ENCODE measurements at regions of chr7 and their contacts with region 1.

Region 1: GRCh38 chr7:108525985-108526767 is at the start of gene PNPLA8:
- DNase-seq: peak; percentile 99
- H3K4me3 ChIP-seq: peak within 1 kb of the TSS; percentile 84
- H3K27ac ChIP-seq: peak within 1 kb of the TSS; percentile 73
- H3K4me1 ChIP-seq: peaks cover 34% of the 10 kb centered on the region
- CTCF ChIP-seq: no peak
- total RNA-seq, gene PNPLA8: 23.0 and 24.2 TPM in 2 replicates

Region 2: GRCh38 chr7:108497082-108497725 is 29.0 kb before region 1 on chr7:
- CTCF ChIA-PET with region 1: interaction called, 3 read pairs
- POLR2A ChIA-PET with region 1: interaction called, 31 read pairs
- intact Hi-C with region 1: loop called (anchors 2 kb)
- DNase-seq: peak; percentile 77
- H3K4me3 ChIP-seq: no peak overlapping the region
- H3K27ac ChIP-seq: no peak overlapping the region
- H3K4me1 ChIP-seq: peaks cover 7% of the 10 kb centered on the region
- CTCF ChIP-seq: peak; percentile 97

Region 3: GRCh38 chr7:108503112-108504026 is 22.8 kb before region 1 on chr7:
- CTCF ChIA-PET with region 1: interaction called, 3 read pairs
- POLR2A ChIA-PET with region 1: interaction called, 44 read pairs
- intact Hi-C with region 1: loop called (anchors 2 kb)
- DNase-seq: peak; percentile 90
- H3K4me3 ChIP-seq: peak overlapping the region; percentile 57
- H3K27ac ChIP-seq: peak overlapping the region; percentile 95
- H3K4me1 ChIP-seq: peaks cover 30% of the 10 kb centered on the region
- CTCF ChIP-seq: no peak

Region 4: GRCh38 chr7:108515013-108515412 is 11.2 kb before region 1 on chr7:
- CTCF ChIA-PET with region 1: interaction called, 3 read pairs
- POLR2A ChIA-PET with region 1: interaction called, 37 read pairs
- intact Hi-C with region 1: no loop called
- DNase-seq: no peak
- H3K4me3 ChIP-seq: no peak overlapping the region
- H3K27ac ChIP-seq: peak overlapping the region; percentile 7
- H3K4me1 ChIP-seq: peaks cover 44% of the 10 kb centered on the region
- CTCF ChIP-seq: no peak

Region 5: DNA sequence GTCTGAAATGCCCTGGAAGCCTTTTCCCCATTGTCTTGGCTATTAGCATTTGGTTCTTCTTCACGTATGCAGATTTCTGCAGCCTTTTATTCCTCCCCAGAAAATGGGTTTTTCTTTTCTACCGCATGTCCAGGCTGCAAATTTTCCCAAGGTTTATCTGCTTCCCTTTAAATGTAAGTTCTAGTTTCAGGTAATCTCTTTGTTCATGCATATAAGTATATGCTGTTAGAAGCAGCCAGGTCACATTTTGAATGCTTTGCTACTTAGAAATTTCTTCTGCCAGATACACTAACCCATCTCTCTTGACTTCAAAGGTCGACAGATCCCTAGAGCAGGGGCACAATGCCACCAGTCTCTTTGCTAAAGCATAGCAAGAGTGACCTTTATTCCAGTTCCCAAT is 31.0 kb after region 1 on chr7:
- CTCF ChIA-PET with region 1: interaction called, 4 read pairs
- POLR2A ChIA-PET with region 1: interaction called, 14 read pairs
- intact Hi-C with region 1: no loop called
- DNase-seq: no peak
- H3K4me3 ChIP-seq: no peak overlapping the region
- H3K27ac ChIP-seq: no peak overlapping the region
- H3K4me1 ChIP-seq: peaks cover 8% of the 10 kb centered on the region
- CTCF ChIP-seq: no peak

Region 6: DNA sequence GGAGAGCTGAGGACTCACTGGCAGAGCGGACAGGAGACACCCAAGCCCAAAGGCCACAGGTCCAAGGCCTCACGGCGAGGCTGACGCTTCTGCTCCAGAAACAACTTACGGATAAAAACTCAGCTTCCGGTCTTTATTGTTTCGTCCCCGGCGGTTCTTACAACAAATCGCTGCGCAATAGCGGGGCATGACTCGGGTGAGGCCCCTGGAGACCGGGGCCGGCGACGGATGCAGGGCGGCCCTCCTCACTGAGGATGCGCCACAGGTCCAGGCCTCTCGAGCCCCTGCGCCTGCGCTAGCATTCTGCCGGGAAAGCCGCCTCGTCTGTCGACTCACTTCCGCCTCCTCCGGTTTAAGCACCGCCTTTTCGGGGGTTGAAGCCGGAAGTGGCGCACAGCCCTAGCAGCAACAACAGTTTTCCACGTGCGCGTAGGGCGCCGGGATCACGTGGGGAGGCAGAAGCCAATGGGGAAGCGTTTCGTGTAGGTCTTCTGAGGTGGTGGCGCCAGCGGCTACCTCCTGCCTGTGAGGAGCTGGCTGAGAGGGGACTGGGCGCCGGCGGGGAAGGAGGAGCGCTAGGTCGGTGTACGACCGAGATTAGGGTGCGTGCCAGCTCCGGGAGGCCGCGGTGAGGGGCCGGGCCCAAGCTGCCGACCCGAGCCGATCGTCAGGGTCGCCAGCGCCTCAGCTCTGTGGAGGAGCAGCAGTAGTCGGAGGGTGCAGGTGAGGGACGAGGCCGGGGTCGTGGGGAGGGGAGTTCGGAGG is 43.4 kb after region 1 on chr7 and contains the starts of genes DNAJB9 and THAP5:
- CTCF ChIA-PET with region 1: no interaction called
- POLR2A ChIA-PET with region 1: interaction called, 24 read pairs
- intact Hi-C with region 1: loop called (anchors 1 kb)
- DNase-seq: peak; percentile 99
- H3K4me3 ChIP-seq: peak within 1 kb of the TSS; percentile 81
- H3K27ac ChIP-seq: peak within 1 kb of the TSS; percentile 89
- H3K4me1 ChIP-seq: peaks cover 26% of the 10 kb centered on the region
- CTCF ChIP-seq: no peak
- total RNA-seq, gene DNAJB9: 20.3 and 22.4 TPM in 2 replicates
- total RNA-seq, gene THAP5: 23.5 and 24.2 TPM in 2 replicates